Vagina (tissue), 2 donors: ENCODE measurements at regions of chr22 and their contacts with region 1.

Region 1: GRCh38 chr22:37887610-37888378 is 18.3 kb upstream of the MICALL1 start:
- DNase-seq: no peak
- H3K4me3 ChIP-seq: no peak overlapping the region
- H3K27ac ChIP-seq: peak overlapping the region; percentile 78
- H3K4me1 ChIP-seq: peaks cover 46% of the 10 kb centered on the region
- H3K27me3 ChIP-seq: no peaks in the 10 kb centered on the region
- CTCF ChIP-seq: peak in 2 of 3 experiments; percentile 48 to 54
- POLR2A ChIP-seq: no peak

Region 2: GRCh38 chr22:37933711-37934376 is 46.0 kb after region 1 on chr22:
- intact Hi-C with region 1: loop called (anchors 10 kb)
- DNase-seq: no peak
- H3K4me3 ChIP-seq: no peak overlapping the region
- H3K27ac ChIP-seq: peak overlapping the region; percentile 80
- H3K4me1 ChIP-seq: peaks cover 41% of the 10 kb centered on the region
- H3K27me3 ChIP-seq: no peaks in the 10 kb centered on the region
- CTCF ChIP-seq: peak; percentile 86 to 98 (median 97)
- POLR2A ChIP-seq: no peak

Region 3: GRCh38 chr22:37965940-37966664 is 78.3 kb after region 1 on chr22:
- intact Hi-C with region 1: loop called (anchors 5 kb)
- DNase-seq: no peak
- H3K4me3 ChIP-seq: no peak overlapping the region
- H3K27ac ChIP-seq: no peak overlapping the region
- H3K4me1 ChIP-seq: no peaks in the 10 kb centered on the region
- H3K27me3 ChIP-seq: no peaks in the 10 kb centered on the region
- CTCF ChIP-seq: no peak
- POLR2A ChIP-seq: no peak